Transverse colon (tissue), 4 donors: ENCODE measurements at regions of chr11 and their contacts with region 1.

Region 1: DNA sequence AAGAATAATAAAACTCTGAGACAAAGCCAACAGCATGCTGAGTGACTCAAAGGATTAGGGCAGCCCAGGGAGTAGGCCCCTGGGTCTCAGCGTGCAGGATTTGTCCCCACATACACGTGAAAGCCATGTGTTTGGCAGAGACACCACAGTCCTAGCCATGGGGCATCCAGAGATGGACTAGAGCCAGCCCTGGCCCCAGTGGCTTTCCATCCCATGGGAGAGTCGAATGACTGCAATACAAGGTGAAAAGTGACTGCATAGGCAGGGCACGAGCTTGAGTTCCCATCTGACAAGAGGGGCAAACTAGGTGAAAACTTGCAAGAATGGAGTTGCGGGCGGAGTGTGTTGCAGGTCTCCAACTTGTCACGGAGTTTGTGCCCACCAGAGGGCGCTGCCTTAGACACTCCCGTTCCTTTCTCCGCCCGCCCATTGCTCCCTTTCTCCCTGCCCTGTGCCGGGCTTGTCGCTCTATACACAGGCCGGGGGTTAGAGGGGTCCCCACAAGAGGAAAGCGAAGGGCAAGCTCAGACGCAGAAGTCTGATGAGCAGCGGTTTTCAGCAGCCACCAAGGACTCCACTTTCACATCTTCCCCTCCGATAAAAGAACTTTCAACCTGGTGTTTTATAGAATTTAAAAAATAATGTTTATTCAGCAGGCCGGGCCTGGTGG is 24.2 kb downstream of the TSKU start:
- DNase-seq: peak; percentile 89
- H3K4me3 ChIP-seq: peak overlapping the region in 1 of 4 donors; percentile 22
- H3K27ac ChIP-seq: no peak overlapping the region
- H3K4me1 ChIP-seq: peaks cover 0 to 20% (median 10%) of the 10 kb centered on the region in 4 donors
- H3K27me3 ChIP-seq: no peaks in the 10 kb centered on the region
- CTCF ChIP-seq: peak; percentile 71 to 86 (median 78)
- EP300 ChIP-seq: no peak
- POLR2A ChIP-seq: no peak

Region 2: DNA sequence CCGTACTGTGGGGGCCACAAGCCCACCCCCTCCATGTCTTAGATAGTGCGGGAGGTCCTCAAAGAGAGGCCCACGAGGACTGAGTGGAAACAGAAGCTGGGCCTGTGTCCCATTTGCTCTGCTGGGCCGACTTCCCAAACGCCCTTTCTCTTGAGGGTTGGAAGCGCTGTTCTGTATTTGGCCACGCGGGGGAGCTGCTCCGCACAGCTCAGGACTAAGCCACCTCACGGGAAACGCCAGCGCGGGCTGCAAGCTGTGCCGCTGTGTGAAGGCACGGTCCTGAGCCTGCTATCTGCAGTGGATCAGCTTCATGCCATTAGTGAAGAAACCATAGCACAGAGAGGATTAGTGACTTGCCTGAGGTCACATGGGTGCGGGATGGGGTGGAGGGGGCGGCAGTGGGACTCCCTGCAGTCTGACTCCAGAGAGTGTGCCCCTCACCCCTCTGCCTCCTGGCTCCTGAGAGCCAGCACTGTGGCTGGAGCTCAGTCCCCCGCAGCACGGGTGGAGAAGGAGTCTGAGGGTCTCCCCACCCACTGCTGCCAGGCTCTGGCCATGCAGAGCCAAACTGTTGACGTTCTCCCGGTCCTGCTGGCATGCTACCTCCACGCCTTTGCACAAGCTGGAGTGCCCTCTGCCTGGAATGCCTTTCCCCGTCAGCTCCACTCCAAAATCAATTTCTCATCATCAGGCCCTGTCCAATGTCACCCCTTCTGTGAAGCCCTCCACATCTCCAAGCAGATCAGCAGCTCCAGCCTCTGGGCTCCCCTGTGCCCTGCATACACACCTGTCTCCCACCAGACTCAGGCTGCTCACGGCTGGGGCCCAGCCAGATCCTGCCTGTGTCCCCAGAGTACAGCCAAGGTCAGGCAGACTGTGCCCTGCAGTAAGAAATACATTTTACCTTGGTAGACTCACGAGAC is 85.3 kb before region 1 on chr11:
- in situ Hi-C with region 1: no loop called
- intact Hi-C with region 1: loop called (anchors 2 kb)
- DNase-seq: peak; percentile 87
- H3K4me3 ChIP-seq: no peak overlapping the region
- H3K27ac ChIP-seq: no peak overlapping the region
- H3K4me1 ChIP-seq: peaks cover 0 to 7% (median 4%) of the 10 kb centered on the region in 4 donors
- H3K27me3 ChIP-seq: peaks cover 12% of the 10 kb centered on the region
- CTCF ChIP-seq: peak; percentile 75 to 91 (median 87)
- EP300 ChIP-seq: no peak
- POLR2A ChIP-seq: no peak

Region 3: DNA sequence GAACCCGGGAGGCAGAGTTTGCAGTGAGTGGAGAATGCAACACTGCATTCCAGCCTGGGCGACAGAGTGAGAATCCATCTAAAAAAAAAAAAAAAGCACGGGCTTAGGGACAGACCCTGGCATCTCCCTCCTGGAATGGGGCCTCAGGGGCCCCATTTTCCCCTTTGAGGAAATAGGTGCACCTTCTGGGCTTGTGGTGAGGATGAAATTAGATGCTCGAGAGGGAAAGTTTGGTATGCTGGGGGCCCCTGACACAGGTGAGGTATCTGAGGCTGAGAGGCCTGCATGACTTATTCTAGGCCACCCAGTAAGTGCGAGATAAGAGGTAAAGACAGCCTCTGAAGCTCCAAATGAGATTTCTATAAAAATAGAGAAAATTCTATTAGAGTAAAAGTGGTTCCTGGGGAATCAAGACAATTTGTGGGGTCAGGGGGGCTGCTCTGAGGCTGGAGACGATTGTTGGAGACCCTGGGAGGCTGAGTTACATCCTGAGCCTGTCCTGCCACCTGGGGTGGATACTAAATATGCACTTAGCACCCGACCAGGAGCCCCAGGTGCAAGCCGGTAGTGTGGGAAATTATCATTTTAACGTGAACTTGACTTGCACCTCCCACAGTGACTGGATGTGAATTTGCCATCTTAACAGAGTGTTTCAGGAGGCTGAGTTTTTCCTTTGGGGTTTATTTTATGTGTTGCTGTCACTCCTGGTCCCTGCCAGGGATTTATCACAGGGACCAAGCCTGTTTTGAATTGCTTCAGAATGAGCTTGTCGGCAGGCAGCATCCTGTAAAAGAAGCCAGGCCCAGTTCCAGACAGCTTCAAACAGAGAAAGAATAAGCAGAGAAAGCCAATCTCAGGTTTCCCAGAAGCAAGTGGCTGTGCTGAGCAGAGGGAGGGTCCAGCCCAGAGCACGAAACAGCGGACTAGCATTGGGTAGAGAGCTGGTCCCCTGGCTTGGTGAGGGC is 72.6 kb before region 1 on chr11:
- in situ Hi-C with region 1: loop called in 1 of 4 experiments (anchors 5 kb)
- intact Hi-C with region 1: no loop called
- DNase-seq: no peak
- H3K4me3 ChIP-seq: no peak overlapping the region
- H3K27ac ChIP-seq: no peak overlapping the region
- H3K4me1 ChIP-seq: peaks cover 0 to 3% (median 0%) of the 10 kb centered on the region in 4 donors
- H3K27me3 ChIP-seq: no peaks in the 10 kb centered on the region
- CTCF ChIP-seq: no peak
- EP300 ChIP-seq: no peak
- POLR2A ChIP-seq: no peak

Region 4: DNA sequence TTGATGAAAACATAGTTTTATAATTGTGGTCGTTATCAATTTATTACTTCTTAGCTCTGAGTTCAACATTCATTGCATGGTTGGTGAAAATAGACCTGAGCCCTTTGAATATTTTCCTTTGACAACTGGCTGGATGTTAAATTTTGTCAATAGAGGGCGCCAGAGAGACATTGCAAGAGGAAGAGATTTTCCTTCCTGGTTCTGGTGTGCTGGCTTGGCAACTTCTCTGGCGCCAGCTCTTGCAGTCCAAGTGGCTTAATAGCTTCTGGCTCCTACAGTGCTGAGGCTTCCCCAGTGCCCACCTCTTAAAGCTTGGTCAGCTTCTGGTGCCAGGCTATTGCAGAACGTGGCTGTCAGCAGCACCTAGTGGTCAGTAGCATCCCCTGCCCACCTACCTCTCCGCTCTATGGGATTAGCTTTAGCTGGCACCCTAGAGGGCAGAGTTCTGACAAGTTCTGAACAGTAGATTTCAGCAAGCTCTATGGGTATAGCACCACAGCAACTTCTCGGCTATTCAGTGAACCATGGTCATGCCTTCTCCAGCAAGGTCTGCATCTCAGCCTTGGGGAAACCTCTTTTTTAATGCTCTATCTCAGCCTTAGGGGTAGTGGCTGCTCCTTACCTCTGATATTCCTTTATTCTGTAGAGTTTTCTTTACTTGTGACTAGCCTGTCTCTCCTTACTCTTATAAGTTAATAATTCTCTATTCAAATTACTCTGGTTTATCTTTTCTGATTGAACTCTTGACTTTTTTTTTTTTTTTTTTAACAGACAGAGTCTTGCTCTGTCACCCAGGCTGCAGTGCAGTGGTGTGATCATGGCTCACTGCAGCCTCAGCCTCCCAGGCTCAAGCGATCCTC is 112.8 kb after region 1 on chr11:
- in situ Hi-C with region 1: loop called (anchors 5 to 10 kb)
- intact Hi-C with region 1: loop called (anchors 5 kb)
- DNase-seq: peak; percentile 79
- H3K4me3 ChIP-seq: peak overlapping the region in 1 of 4 donors; percentile 33
- H3K27ac ChIP-seq: peak overlapping the region; percentile 54 to 83 (median 70)
- H3K4me1 ChIP-seq: peaks cover 3 to 32% (median 15%) of the 10 kb centered on the region in 4 donors
- H3K27me3 ChIP-seq: no peaks in the 10 kb centered on the region
- CTCF ChIP-seq: peak; percentile 84 to 92 (median 89)
- EP300 ChIP-seq: no peak
- POLR2A ChIP-seq: no peak

Region 5: DNA sequence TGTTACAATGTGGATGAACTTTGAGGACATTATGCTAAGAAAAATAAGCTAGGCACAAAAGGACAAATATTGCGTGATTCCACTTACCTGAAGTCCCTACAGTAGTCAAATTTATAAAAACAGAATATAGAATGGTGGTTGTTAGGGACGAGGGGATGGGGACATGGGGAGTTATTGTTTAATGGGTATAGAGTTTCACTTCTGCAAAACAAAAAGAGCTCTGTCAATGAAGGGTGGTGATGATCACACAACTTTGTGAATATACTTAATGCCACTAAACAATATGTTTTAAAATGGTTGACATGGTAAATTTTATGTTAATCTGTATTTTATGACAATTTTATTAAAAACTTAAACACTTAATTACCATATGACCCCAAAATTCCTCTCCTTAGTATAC is 1161.0 kb after region 1 on chr11:
- in situ Hi-C with region 1: no loop called
- intact Hi-C with region 1: loop called (anchors 10 kb)
- DNase-seq: no peak
- H3K4me3 ChIP-seq: no peak overlapping the region
- H3K27ac ChIP-seq: no peak overlapping the region
- H3K4me1 ChIP-seq: no peaks in the 10 kb centered on the region
- H3K27me3 ChIP-seq: no peaks in the 10 kb centered on the region
- CTCF ChIP-seq: no peak
- EP300 ChIP-seq: no peak
- POLR2A ChIP-seq: no peak